Naive thymus-derived CD4-positive, alpha-beta T cell (primary cell): ENCODE measurements at regions of chr2 and their contacts with region 1.

Region 1: GRCh38 chr2:38115216-38116032 is 39.5 kb upstream of the CYP1B1 start:
- DNase-seq: peak in 8 of 9 donors; percentile 26 to 77 (median 34)
- ATAC-seq: peak; percentile 72
- H3K4me3 ChIP-seq: no peak overlapping the region
- H3K4me3 Mint-ChIP-seq: no peak overlapping the region
- H3K27ac ChIP-seq: no peak overlapping the region
- H3K27ac Mint-ChIP-seq: no peak overlapping the region
- H3K4me1 ChIP-seq: no peaks in the 10 kb centered on the region
- H3K4me1 Mint-ChIP-seq: peaks cover 0 to 4% (median 0%) of the 10 kb centered on the region in 7 donors
- H3K27me3 ChIP-seq: no peaks in the 10 kb centered on the region
- H3K27me3 Mint-ChIP-seq: peaks cover 11 to 52% (median 34%) of the 10 kb centered on the region in 5 donors

Region 2: DNA sequence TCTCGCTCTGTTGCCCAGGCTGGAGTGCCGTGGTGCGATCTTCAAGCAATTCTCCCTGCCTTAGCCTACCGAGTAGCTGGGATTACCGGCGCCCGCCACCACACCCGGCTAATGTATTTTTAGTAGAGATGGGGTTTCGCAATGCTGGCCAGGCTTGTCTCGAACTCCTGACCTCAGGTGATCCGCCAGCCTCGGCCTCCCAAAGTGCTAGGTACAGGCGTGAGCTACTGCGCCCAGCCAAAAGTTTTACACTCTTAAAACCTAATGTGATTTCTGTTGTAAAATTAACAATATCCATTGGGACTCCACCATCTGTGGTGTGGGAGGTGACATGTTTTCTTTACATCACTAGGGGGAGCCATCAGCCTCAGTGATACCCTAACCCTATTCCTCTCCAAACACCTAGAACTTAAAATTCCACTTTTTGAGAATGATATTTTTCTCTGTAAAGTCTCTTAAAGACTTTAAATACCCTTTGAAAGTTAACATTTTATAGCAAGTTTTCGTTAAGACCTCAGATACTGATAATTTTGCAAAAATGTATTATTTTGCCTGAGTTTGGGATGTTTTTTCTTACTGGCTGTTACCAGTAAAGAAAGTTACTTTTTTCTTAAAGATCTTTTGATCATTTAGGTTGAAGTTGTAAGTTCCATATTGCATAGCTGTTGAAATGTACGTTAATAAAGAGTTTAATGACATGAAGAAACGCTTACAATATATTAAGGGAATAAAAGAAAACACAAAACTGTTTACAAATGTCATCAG is 947.0 kb before region 1 on chr2:
- CTCF ChIA-PET with region 1: no interaction called
- POLR2A ChIA-PET with region 1: no interaction called
- intact Hi-C with region 1: loop called in 1 of 2 experiments (anchors 10 kb)
- DNase-seq: peak in 6 of 9 donors; percentile 14 to 52 (median 40)
- ATAC-seq: peak; percentile 80
- H3K4me3 ChIP-seq: no peak overlapping the region
- H3K4me3 Mint-ChIP-seq: no peak overlapping the region
- H3K27ac ChIP-seq: no peak overlapping the region
- H3K27ac Mint-ChIP-seq: peak overlapping the region in 1 of 9 donors; percentile 32
- H3K4me1 ChIP-seq: no peaks in the 10 kb centered on the region
- H3K4me1 Mint-ChIP-seq: no peaks in the 10 kb centered on the region
- H3K27me3 ChIP-seq: no peaks in the 10 kb centered on the region
- H3K27me3 Mint-ChIP-seq: peaks cover 0 to 3% (median 0%) of the 10 kb centered on the region in 5 donors

Region 3: GRCh38 chr2:37890893-37891495 is 224.4 kb before region 1 on chr2:
- CTCF ChIA-PET with region 1: no interaction called
- POLR2A ChIA-PET with region 1: no interaction called
- intact Hi-C with region 1: loop called (anchors 1 kb)
- DNase-seq: peak; percentile 17 to 63 (median 44)
- ATAC-seq: peak; percentile 72
- H3K4me3 ChIP-seq: no peak overlapping the region
- H3K4me3 Mint-ChIP-seq: peak overlapping the region in 6 of 10 donors; percentile 12 to 75 (median 55)
- H3K27ac ChIP-seq: no peak overlapping the region
- H3K27ac Mint-ChIP-seq: peak overlapping the region in 2 of 9 donors; percentile 35 to 71
- H3K4me1 ChIP-seq: peaks cover 25 to 33% of the 10 kb centered on the region in 2 donors
- H3K4me1 Mint-ChIP-seq: peaks cover 24 to 58% (median 45%) of the 10 kb centered on the region in 7 donors
- H3K27me3 ChIP-seq: no peaks in the 10 kb centered on the region
- H3K27me3 Mint-ChIP-seq: peaks cover 0 to 29% (median 2%) of the 10 kb centered on the region in 5 donors

Region 4: DNA sequence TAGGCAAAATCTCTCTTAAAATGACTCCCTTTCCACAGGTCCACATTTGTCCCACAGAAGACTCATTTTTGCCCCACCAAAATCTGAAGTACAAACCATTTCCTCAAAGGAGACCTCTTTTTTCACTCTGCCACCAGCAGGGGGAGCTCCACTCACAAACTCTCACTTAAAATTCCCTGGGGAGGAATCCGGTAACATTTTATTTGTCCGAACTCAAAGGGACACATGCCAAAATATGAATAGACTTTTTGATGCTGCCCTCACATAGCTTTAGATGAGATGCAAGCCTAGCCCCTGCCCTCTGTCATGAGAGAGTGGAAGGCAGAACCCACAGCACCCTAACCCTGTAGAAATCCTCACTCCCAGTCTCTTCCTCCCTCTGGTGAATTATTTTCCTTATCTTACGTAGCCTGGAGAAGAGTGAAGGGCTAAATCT is 133.3 kb before region 1 on chr2:
- CTCF ChIA-PET with region 1: no interaction called
- POLR2A ChIA-PET with region 1: no interaction called
- intact Hi-C with region 1: loop called (anchors 1 kb)
- DNase-seq: peak in 7 of 9 donors; percentile 33 to 61 (median 39)
- ATAC-seq: peak; percentile 52
- H3K4me3 ChIP-seq: no peak overlapping the region
- H3K4me3 Mint-ChIP-seq: peak overlapping the region in 1 of 10 donors; percentile 14
- H3K27ac ChIP-seq: no peak overlapping the region
- H3K27ac Mint-ChIP-seq: no peak overlapping the region
- H3K4me1 ChIP-seq: no peaks in the 10 kb centered on the region
- H3K4me1 Mint-ChIP-seq: peaks cover 0 to 8% (median 6%) of the 10 kb centered on the region in 7 donors
- H3K27me3 ChIP-seq: no peaks in the 10 kb centered on the region
- H3K27me3 Mint-ChIP-seq: peaks cover 0 to 14% (median 0%) of the 10 kb centered on the region in 5 donors

Region 5: GRCh38 chr2:38076606-38077430 is 38.6 kb before region 1 on chr2:
- CTCF ChIA-PET with region 1: no interaction called
- POLR2A ChIA-PET with region 1: no interaction called
- intact Hi-C with region 1: loop called in 1 of 2 experiments (anchors 1 kb)
- DNase-seq: peak in 2 of 9 donors; percentile 12 to 78
- ATAC-seq: peak; percentile 67
- H3K4me3 ChIP-seq: no peak overlapping the region
- H3K4me3 Mint-ChIP-seq: peak overlapping the region in 9 of 10 donors; percentile 18 to 85 (median 61)
- H3K27ac ChIP-seq: no peak overlapping the region
- H3K27ac Mint-ChIP-seq: peak overlapping the region in 1 of 9 donors; percentile 83
- H3K4me1 ChIP-seq: no peaks in the 10 kb centered on the region
- H3K4me1 Mint-ChIP-seq: peaks cover 7 to 43% (median 19%) of the 10 kb centered on the region in 7 donors
- H3K27me3 ChIP-seq: peaks cover 4 to 5% of the 10 kb centered on the region in 2 donors
- H3K27me3 Mint-ChIP-seq: peaks cover 39 to 73% (median 51%) of the 10 kb centered on the region in 5 donors

Region 6: GRCh38 chr2:38274286-38275276 is 159.2 kb after region 1 on chr2:
- CTCF ChIA-PET with region 1: no interaction called
- POLR2A ChIA-PET with region 1: no interaction called
- intact Hi-C with region 1: loop called in 1 of 2 experiments (anchors 2 kb)
- DNase-seq: peak in 7 of 9 donors; percentile 17 to 44 (median 32)
- ATAC-seq: peak; percentile 77
- H3K4me3 ChIP-seq: no peak overlapping the region
- H3K4me3 Mint-ChIP-seq: no peak overlapping the region
- H3K27ac ChIP-seq: no peak overlapping the region
- H3K27ac Mint-ChIP-seq: peak overlapping the region in 1 of 9 donors; percentile 1
- H3K4me1 ChIP-seq: no peaks in the 10 kb centered on the region
- H3K4me1 Mint-ChIP-seq: peaks cover 0 to 7% (median 0%) of the 10 kb centered on the region in 7 donors
- H3K27me3 ChIP-seq: no peaks in the 10 kb centered on the region
- H3K27me3 Mint-ChIP-seq: peaks cover 0 to 5% (median 0%) of the 10 kb centered on the region in 5 donors

Region 7: DNA sequence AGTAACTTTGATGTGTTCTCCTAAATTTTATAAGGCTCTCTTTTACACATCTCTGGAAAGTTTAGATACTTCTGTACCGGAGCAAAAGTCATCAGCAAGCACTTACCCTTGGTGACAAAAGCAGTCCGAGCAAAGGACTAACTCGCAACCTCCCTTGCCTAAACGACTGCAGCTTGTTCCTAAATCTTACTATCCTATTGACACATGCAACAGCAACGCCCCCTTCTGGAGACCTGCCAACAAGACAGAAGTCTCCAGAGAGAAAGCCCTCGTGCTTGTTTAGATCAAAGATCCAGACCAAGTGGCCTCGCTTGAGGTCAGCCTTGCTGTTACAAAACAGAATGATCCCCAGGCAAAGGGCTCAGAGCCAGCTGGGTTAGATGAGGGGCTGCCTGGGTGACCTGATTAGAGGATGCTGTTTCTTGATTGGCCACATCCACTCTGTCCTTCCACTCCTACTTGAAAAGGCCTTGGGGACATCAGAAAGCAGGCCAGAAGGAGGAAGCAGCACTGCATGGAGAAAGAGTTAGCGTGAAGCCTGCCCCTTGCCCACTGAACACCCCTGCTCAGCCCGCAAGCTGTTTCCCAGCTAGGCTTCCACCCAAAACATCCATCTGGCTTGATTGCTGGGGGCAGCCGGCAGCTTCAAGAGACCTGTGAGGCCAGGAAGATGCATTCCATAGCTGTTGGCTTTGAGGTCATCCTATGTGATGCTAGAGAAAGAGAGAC is 393.1 kb after region 1 on chr2:
- CTCF ChIA-PET with region 1: no interaction called
- POLR2A ChIA-PET with region 1: no interaction called
- intact Hi-C with region 1: loop called in 1 of 2 experiments (anchors 5 kb)
- DNase-seq: peak; percentile 49 to 76 (median 67)
- ATAC-seq: peak; percentile 84
- H3K4me3 ChIP-seq: no peak overlapping the region
- H3K4me3 Mint-ChIP-seq: no peak overlapping the region
- H3K27ac ChIP-seq: no peak overlapping the region
- H3K27ac Mint-ChIP-seq: peak overlapping the region in 2 of 9 donors; percentile 15 to 19
- H3K4me1 ChIP-seq: no peaks in the 10 kb centered on the region
- H3K4me1 Mint-ChIP-seq: peaks cover 0 to 19% (median 0%) of the 10 kb centered on the region in 7 donors
- H3K27me3 ChIP-seq: no peaks in the 10 kb centered on the region
- H3K27me3 Mint-ChIP-seq: peaks cover 0 to 14% (median 5%) of the 10 kb centered on the region in 5 donors